ENCODE measurements at regions of chr12 and their contacts with region 1.

Region 1: GRCh38 chr12:12786716-12787601 is 1.5 kb downstream of the APOLD1 start:
- DNase-seq: peak; percentile 85 to 90
- ATAC-seq: peak; percentile 58 to 93 (median 79)
- H3K4me3 ChIP-seq: peak overlapping the region; percentile 48 to 76 (median 66)
- H3K27ac ChIP-seq: peak overlapping the region; percentile 84 to 98 (median 94)
- H3K4me1 ChIP-seq: peaks cover 0 to 73% (median 37%) of the 10 kb centered on the region in 9 donors
- H3K27me3 ChIP-seq: no peaks in the 10 kb centered on the region
- CTCF ChIP-seq: peak in 4 of 9 donors; percentile 9 to 17 (median 14)

Region 2: DNA sequence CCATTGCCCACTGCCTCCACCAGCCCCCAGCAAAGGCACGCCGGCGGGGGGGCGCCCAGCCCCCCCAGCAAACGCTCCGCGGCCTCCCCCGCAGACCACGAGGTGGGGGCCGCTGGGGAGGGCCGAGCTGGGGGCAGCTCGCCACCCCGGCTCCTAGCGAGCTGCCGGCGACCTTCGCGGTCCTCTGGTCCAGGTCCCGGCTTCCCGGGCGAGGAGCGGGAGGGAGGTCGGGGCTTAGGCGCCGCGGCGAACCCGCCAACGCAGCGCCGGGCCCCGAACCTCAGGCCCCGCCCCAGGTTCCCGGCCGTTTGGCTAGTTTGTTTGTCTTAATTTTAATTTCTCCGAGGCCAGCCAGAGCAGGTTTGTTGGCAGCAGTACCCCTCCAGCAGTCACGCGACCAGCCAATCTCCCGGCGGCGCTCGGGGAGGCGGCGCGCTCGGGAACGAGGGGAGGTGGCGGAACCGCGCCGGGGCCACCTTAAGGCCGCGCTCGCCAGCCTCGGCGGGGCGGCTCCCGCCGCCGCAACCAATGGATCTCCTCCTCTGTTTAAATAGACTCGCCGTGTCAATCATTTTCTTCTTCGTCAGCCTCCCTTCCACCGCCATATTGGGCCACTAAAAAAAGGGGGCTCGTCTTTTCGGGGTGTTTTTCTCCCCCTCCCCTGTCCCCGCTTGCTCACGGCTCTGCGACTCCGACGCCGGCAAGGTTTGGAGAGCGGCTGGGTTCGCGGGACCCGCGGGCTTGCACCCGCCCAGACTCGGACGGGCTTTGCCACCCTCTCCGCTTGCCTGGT is 70.0 kb before region 1 on chr12 and contains the start of gene CDKN1B:
- intact Hi-C with region 1: loop called in 4 of 10 experiments (anchors 1 to 5 kb)
- DNase-seq: peak; percentile 91 to 92
- ATAC-seq: peak; percentile 92 to 96 (median 94)
- H3K4me3 ChIP-seq: peak within 1 kb of the TSS; percentile 64 to 99 (median 96)
- H3K27ac ChIP-seq: peak within 1 kb of the TSS; percentile 99 to 100 (median 100)
- H3K4me1 ChIP-seq: peaks cover 15 to 67% (median 61%) of the 10 kb centered on the region in 9 donors
- H3K27me3 ChIP-seq: no peaks in the 10 kb centered on the region
- CTCF ChIP-seq: peak in 1 of 9 donors; percentile 11
- total RNA-seq, gene CDKN1B: 26.3 to 56.2 (median 39.2) TPM

Region 3: GRCh38 chr12:12724661-12725545 is 62.1 kb before region 1 on chr12:
- intact Hi-C with region 1: loop called in 3 of 10 experiments (anchors 2 to 5 kb)
- DNase-seq: peak; percentile 90 to 96
- ATAC-seq: peak; percentile 82 to 89 (median 86)
- H3K4me3 ChIP-seq: peak overlapping the region; percentile 42 to 90 (median 77)
- H3K27ac ChIP-seq: peak overlapping the region; percentile 95 to 100 (median 98)
- H3K4me1 ChIP-seq: peaks cover 3 to 64% (median 44%) of the 10 kb centered on the region in 9 donors
- H3K27me3 ChIP-seq: no peaks in the 10 kb centered on the region
- CTCF ChIP-seq: peak in 1 of 9 donors; percentile 19

Region 4: GRCh38 chr12:12736759-12737676 is 49.9 kb before region 1 on chr12:
- intact Hi-C with region 1: loop called in 2 of 10 experiments (anchors 5 kb)
- DNase-seq: peak in 1 of 2 donors; percentile 29
- ATAC-seq: peak; percentile 67 to 83 (median 79)
- H3K4me3 ChIP-seq: peak overlapping the region in 3 of 10 donors; percentile 2 to 24 (median 15)
- H3K27ac ChIP-seq: peak overlapping the region in 4 of 10 donors; percentile 24 to 80 (median 60)
- H3K4me1 ChIP-seq: peaks cover 0 to 36% (median 24%) of the 10 kb centered on the region in 9 donors
- H3K27me3 ChIP-seq: no peaks in the 10 kb centered on the region
- CTCF ChIP-seq: peak; percentile 38 to 81 (median 67)

Region 5: GRCh38 chr12:12803186-12803585 is 16.2 kb after region 1 on chr12:
- intact Hi-C with region 1: loop called in 3 of 10 experiments (anchors 2 kb)
- DNase-seq: peak in 1 of 2 donors; percentile 64
- ATAC-seq: peak; percentile 56 to 86 (median 70)
- H3K4me3 ChIP-seq: no peak overlapping the region
- H3K27ac ChIP-seq: peak overlapping the region in 6 of 10 donors; percentile 1 to 63 (median 28)
- H3K4me1 ChIP-seq: peaks cover 0 to 36% (median 24%) of the 10 kb centered on the region in 9 donors
- H3K27me3 ChIP-seq: no peaks in the 10 kb centered on the region
- CTCF ChIP-seq: no peak

Region 6: GRCh38 chr12:12813120-12814101 is 26.5 kb after region 1 on chr12 and contains the start of gene DDX47:
- intact Hi-C with region 1: loop called in 4 of 10 experiments (anchors 2 kb)
- DNase-seq: peak; percentile 96 to 97
- ATAC-seq: peak; percentile 92 to 98 (median 94)
- H3K4me3 ChIP-seq: peak within 1 kb of the TSS; percentile 53 to 97 (median 88)
- H3K27ac ChIP-seq: peak within 1 kb of the TSS in 8 of 10 donors; percentile 37 to 90 (median 79)
- H3K4me1 ChIP-seq: peaks cover 5 to 69% (median 43%) of the 10 kb centered on the region in 9 donors
- H3K27me3 ChIP-seq: no peaks in the 10 kb centered on the region
- CTCF ChIP-seq: peak; percentile 89 to 99 (median 96)
- total RNA-seq, gene DDX47: 24.0 to 32.3 (median 29.9) TPM

Region 7: DNA sequence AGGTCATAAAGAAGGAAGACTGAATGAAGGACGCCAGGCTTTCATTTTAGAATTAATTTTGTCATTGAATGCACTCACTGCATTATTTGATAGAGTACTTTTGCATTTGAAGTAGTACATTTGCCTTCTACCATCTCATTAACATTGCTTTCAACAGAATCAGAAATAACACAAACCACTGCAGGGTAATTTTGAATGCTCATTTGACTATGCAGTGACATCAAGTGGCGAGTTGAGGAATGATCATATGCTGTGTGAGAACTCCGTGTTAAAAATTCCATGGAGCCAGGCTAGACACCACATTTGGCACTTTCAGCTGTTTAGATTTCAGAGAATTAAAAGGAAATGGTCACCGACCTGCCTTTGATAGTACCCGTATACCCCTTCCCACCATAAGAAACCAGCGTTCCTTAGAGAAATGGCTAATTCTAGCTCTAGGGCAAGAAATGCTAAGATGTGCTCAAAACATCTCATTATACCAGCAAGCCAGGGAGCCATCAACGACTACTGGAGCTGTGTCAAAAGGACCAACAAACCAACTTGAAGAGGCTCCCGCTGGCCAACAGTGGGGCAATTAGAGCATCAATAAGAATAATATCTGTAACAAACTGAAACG is 196.6 kb after region 1 on chr12:
- intact Hi-C with region 1: loop called in 2 of 10 experiments (anchors 5 to 10 kb)
- DNase-seq: peak in 1 of 2 donors; percentile 23
- ATAC-seq: peak in 6 of 8 donors; percentile 57 to 73 (median 64)
- H3K4me3 ChIP-seq: no peak overlapping the region
- H3K27ac ChIP-seq: no peak overlapping the region
- H3K4me1 ChIP-seq: peaks cover 0 to 13% (median 3%) of the 10 kb centered on the region in 9 donors
- H3K27me3 ChIP-seq: no peaks in the 10 kb centered on the region
- CTCF ChIP-seq: peak; percentile 23 to 73 (median 61)

Measured in heart right ventricle (tissue), 16 donors.